ENCODE measurements at regions of chr20 and their contacts with region 1.

Region 1: DNA sequence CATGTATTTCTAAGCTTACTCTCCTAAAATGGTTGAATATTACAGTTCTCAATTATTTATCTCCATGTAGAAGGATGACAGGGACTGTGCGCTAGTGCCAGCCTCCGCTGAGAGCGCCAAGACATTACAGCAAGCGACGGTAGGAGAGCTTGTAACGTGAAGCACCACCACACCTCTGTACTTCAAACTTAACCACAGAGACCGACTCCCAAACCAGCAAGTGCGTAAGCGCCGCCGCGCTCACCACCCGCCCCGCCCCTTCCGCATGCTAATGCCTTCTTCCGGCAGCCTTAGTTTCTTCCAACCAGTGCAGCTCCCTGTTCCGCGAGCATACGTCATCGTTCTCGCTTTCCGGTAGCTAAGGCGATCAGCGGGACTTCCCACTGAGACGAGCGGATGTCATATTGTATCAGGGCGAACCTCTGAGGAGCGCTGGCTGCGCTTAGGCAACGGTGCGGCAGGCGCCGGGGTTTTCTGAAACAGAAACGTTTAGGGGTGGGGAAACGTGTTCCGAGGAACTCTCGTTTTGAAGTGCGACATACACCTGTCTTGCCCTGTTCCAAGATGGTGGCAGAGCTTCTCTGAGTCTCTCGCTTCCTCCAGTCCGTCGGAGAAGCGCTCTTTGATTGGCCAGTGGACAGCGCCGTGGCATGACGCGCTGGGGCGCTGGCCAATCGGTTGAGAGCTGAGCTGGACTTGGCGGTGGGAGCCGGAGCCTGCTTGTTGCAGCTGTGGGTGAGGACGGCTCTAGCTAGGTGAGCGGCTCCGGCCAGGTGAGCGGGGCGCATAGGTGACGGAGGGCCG is at the start of gene SEC23B:
- DNase-seq: peak; percentile 97 to 98
- H3K4me3 ChIP-seq: peak within 1 kb of the TSS; percentile 61 to 85 (median 79)
- H3K27ac ChIP-seq: peak within 1 kb of the TSS; percentile 95 to 99 (median 96)
- H3K4me1 ChIP-seq: peaks cover 13 to 14% of the 10 kb centered on the region in 2 donors
- H3K27me3 ChIP-seq: no peaks in the 10 kb centered on the region
- CTCF ChIP-seq: peak in 1 of 6 experiments; percentile 9
- POLR2A ChIP-seq: peak in 1 of 2 donors; percentile 81
- total RNA-seq, gene SEC23B: 60.5 to 94.1 (median 84.6) TPM

Region 2: GRCh38 chr20:18412221-18412901 is 95.1 kb before region 1 on chr20:
- intact Hi-C with region 1: loop called (anchors 10 kb)
- DNase-seq: no peak
- H3K4me3 ChIP-seq: no peak overlapping the region
- H3K27ac ChIP-seq: no peak overlapping the region
- H3K4me1 ChIP-seq: peaks cover 20 to 31% of the 10 kb centered on the region in 2 donors
- H3K27me3 ChIP-seq: no peaks in the 10 kb centered on the region
- CTCF ChIP-seq: no peak
- POLR2A ChIP-seq: no peak

Region 3: DNA sequence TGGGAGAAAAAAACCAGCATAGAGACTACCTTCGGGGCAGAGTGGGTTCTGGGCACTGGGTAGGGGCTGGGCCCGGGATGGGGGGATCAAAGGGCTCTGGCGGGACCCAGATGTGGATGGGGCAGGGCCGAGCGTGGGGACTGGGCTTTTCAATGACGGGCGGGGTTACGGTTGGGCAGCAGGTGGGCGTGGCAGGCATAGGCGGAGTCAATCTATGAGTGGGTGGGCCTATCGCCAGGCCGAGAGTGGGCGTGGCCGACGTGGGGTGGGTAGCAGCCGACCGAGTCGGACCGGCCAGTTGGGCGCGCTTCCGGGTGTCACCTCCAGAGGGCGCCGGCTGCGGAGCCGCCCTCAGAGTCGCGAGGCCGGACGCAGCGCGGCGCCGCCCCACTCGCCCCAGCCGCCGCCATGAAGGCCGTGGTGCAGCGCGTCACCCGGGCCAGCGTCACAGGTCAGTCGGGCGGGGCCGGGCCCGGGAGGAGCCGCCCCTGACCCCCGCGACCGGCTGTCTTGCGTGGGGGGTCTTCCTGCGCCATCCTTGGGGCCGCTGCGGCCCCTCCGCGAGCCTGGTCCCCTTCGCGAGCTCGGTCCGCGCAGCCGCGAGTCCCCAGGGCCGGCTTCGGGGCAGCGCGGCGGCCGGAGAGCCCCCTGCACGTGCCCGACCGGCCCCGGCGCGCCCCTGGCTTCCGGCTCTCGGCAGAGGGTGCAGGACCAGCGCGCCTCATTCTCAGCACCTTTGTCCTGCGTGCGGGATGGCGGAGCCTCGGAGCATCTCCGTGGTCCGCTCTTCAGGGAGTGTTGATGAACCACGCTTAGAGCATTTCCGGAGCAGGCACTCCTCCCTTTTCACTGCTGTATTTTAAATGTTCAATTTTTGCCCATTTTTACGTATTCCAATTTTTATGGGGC is 80.5 kb after region 1 on chr20 and contains the start of gene DTD1:
- intact Hi-C with region 1: loop called (anchors 10 kb)
- DNase-seq: peak; percentile 88 to 92
- H3K4me3 ChIP-seq: peak within 1 kb of the TSS; percentile 79 to 90 (median 82)
- H3K27ac ChIP-seq: peak within 1 kb of the TSS; percentile 43 to 61 (median 54)
- H3K4me1 ChIP-seq: peaks cover 12 to 13% of the 10 kb centered on the region in 2 donors
- H3K27me3 ChIP-seq: no peaks in the 10 kb centered on the region
- CTCF ChIP-seq: peak in 5 of 6 experiments; percentile 24 to 79 (median 57)
- POLR2A ChIP-seq: peak in 1 of 2 donors; percentile 62
- total RNA-seq, gene DTD1: 42.7 to 57.6 (median 52.4) TPM

Region 4: DNA sequence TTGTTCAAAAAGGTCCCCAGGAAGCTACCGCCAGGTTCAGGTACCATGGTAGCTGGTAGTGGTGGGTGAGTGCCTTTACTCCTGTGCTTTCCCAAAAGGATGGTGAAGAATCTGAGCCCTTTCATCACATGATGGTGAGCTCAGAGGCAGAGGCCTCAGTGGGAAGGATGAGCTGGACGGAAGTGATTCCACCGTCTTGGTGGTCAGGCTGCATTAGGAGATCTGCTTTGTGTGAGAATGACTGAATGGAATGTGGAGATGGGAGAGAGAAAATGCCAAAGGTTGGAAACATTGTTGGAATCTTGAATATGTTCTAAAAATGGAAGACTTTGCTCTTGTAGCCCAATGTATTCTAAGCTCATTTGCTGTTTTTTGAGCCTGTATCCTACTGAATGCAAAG is 198.1 kb after region 1 on chr20:
- intact Hi-C with region 1: no loop called
- DNase-seq: no peak
- H3K4me3 ChIP-seq: no peak overlapping the region
- H3K27ac ChIP-seq: no peak overlapping the region
- H3K4me1 ChIP-seq: peaks cover 0 to 4% of the 10 kb centered on the region in 2 donors
- H3K27me3 ChIP-seq: no peaks in the 10 kb centered on the region
- CTCF ChIP-seq: no peak
- POLR2A ChIP-seq: no peak

Measured in thyroid gland (tissue), 4 donors.